CD4-positive, alpha-beta T cell (primary cell): ENCODE measurements at regions of chr9 and their contacts with region 1.

Region 1: DNA sequence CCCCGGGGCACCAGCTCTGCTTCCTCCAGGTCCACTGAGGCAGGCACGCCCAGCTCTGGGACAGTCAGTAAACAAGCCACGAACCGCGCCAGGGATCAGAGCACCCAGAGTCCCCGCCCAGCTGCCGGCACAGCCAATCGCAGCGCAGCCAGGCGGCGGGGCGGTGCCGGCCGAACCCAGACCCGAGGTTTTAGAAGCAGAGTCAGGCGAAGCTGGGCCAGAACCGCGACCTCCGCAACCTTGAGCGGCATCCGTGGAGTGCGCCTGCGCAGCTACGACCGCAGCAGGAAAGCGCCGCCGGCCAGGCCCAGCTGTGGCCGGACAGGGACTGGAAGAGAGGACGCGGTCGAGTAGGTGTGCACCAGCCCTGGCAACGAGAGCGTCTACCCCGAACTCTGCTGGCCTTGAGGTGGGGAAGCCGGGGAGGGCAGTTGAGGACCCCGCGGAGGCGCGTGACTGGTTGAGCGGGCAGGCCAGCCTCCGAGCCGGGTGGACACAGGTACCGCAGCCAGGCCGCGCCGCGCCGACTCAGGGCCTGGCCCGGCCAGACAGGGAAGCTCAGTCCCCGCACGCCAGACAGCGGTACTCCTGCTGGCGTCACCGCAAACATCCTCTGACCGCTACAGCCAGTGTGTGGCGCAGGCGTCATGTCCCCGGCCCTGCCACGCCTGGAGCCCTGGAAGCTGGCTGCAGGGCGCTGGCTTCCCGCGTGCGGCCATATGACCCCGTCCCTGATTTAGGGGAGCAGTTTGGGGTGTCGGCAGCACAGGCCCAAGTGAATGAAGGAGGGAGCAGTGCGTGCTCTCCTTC is at the start of gene CTSL:
- DNase-seq: peak; percentile 24 to 82 (median 62)
- ATAC-seq: peak; percentile 83
- H3K4me3 ChIP-seq: peak within 1 kb of the TSS; percentile 73
- H3K4me3 Mint-ChIP-seq: peak within 1 kb of the TSS; percentile 98
- H3K27ac ChIP-seq: peak within 1 kb of the TSS; percentile 25 to 52
- H3K27ac Mint-ChIP-seq: peak within 1 kb of the TSS; percentile 87
- H3K4me1 ChIP-seq: peaks cover 29% of the 10 kb centered on the region
- H3K4me1 Mint-ChIP-seq: peaks cover 59% of the 10 kb centered on the region
- H3K27me3 ChIP-seq: peaks cover 0 to 3% of the 10 kb centered on the region in 2 experiments
- H3K27me3 Mint-ChIP-seq: no peaks in the 10 kb centered on the region
- CTCF ChIP-seq: no peak
- total RNA-seq, gene CTSL: 7.5 to 7.9 TPM

Region 2: GRCh38 chr9:87469793-87470465 is 256.2 kb before region 1 on chr9:
- CTCF ChIA-PET with region 1: no interaction called
- POLR2A ChIA-PET with region 1: no interaction called
- intact Hi-C with region 1: no loop called
- DNase-seq: no peak
- ATAC-seq: no peak
- H3K4me3 ChIP-seq: no peak overlapping the region
- H3K4me3 Mint-ChIP-seq: no peak overlapping the region
- H3K27ac ChIP-seq: no peak overlapping the region
- H3K27ac Mint-ChIP-seq: no peak overlapping the region
- H3K4me1 ChIP-seq: no peaks in the 10 kb centered on the region
- H3K4me1 Mint-ChIP-seq: no peaks in the 10 kb centered on the region
- H3K27me3 ChIP-seq: no peaks in the 10 kb centered on the region
- H3K27me3 Mint-ChIP-seq: no peaks in the 10 kb centered on the region
- CTCF ChIP-seq: no peak

Region 3: GRCh38 chr9:87592554-87593358 is 133.3 kb before region 1 on chr9:
- CTCF ChIA-PET with region 1: no interaction called
- POLR2A ChIA-PET with region 1: no interaction called
- intact Hi-C with region 1: no loop called
- DNase-seq: no peak
- ATAC-seq: no peak
- H3K4me3 ChIP-seq: no peak overlapping the region
- H3K4me3 Mint-ChIP-seq: no peak overlapping the region
- H3K27ac ChIP-seq: no peak overlapping the region
- H3K27ac Mint-ChIP-seq: no peak overlapping the region
- H3K4me1 ChIP-seq: no peaks in the 10 kb centered on the region
- H3K4me1 Mint-ChIP-seq: peaks cover 3% of the 10 kb centered on the region
- H3K27me3 ChIP-seq: no peaks in the 10 kb centered on the region
- H3K27me3 Mint-ChIP-seq: no peaks in the 10 kb centered on the region
- CTCF ChIP-seq: no peak

Region 4: DNA sequence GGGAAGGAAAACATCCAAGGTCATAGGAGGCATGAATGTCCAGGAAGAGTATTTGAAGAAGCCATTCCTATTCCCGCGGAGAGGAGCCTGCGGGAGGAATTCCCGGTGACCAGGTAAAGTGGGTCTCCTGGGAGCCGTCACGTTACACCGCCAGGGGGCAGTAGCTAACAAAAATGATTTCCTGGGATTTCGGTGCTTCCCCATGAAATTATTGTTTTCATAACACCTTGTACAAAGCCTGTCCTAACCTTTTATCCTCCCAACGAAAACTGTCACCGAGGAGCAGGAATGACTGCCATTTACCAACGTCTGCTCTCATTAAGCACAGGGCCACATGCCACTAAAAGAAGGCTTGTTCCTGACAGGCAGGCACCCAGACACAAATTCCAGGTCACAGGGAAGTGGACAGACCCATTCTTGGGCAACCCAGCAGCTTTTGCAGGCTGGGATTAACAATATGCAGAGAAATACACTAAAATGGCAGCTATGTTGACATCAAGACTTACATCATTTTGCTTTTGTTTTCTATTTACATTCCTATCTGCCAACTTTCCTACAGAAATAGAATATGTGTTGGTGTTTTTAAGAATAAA is 41.4 kb before region 1 on chr9:
- CTCF ChIA-PET with region 1: no interaction called
- POLR2A ChIA-PET with region 1: interaction called, 11 read pairs
- intact Hi-C with region 1: loop called in 1 of 2 experiments (anchors 5 kb)
- DNase-seq: peak in 1 of 14 experiments; percentile 41
- ATAC-seq: no peak
- H3K4me3 ChIP-seq: no peak overlapping the region
- H3K4me3 Mint-ChIP-seq: no peak overlapping the region
- H3K27ac ChIP-seq: no peak overlapping the region
- H3K27ac Mint-ChIP-seq: peak overlapping the region; percentile 76
- H3K4me1 ChIP-seq: peaks cover 20% of the 10 kb centered on the region
- H3K4me1 Mint-ChIP-seq: peaks cover 29% of the 10 kb centered on the region
- H3K27me3 ChIP-seq: no peaks in the 10 kb centered on the region
- H3K27me3 Mint-ChIP-seq: no peaks in the 10 kb centered on the region
- CTCF ChIP-seq: peak; percentile 30

Region 5: GRCh38 chr9:87708986-87709728 is 16.9 kb before region 1 on chr9:
- CTCF ChIA-PET with region 1: interaction called, 3 read pairs
- POLR2A ChIA-PET with region 1: interaction called, 15 read pairs
- intact Hi-C with region 1: no loop called
- DNase-seq: peak in 4 of 14 experiments; percentile 44 to 54 (median 45)
- ATAC-seq: peak; percentile 84
- H3K4me3 ChIP-seq: peak overlapping the region; percentile 3
- H3K4me3 Mint-ChIP-seq: peak overlapping the region; percentile 76
- H3K27ac ChIP-seq: peak overlapping the region; percentile 14 to 53
- H3K27ac Mint-ChIP-seq: peak overlapping the region; percentile 89
- H3K4me1 ChIP-seq: peaks cover 41% of the 10 kb centered on the region
- H3K4me1 Mint-ChIP-seq: peaks cover 60% of the 10 kb centered on the region
- H3K27me3 ChIP-seq: no peaks in the 10 kb centered on the region
- H3K27me3 Mint-ChIP-seq: no peaks in the 10 kb centered on the region
- CTCF ChIP-seq: no peak